GM13976 (cell line): ENCODE measurements at regions of chr2 and their contacts with region 1.

Region 1: GRCh38 chr2:86221066-86221684 is 21.9 kb downstream of the MRPL35 start:
- DNase-seq: peak; percentile 69
- CTCF ChIP-seq: peak; percentile 63

Region 2: GRCh38 chr2:86368161-86368824 is 147.1 kb after region 1 on chr2:
- in situ Hi-C with region 1: loop called (anchors 10 kb)
- DNase-seq: peak; percentile 77
- CTCF ChIP-seq: peak; percentile 68